ENCODE measurements at regions of chr10 and their contacts with region 1.

Region 1: DNA sequence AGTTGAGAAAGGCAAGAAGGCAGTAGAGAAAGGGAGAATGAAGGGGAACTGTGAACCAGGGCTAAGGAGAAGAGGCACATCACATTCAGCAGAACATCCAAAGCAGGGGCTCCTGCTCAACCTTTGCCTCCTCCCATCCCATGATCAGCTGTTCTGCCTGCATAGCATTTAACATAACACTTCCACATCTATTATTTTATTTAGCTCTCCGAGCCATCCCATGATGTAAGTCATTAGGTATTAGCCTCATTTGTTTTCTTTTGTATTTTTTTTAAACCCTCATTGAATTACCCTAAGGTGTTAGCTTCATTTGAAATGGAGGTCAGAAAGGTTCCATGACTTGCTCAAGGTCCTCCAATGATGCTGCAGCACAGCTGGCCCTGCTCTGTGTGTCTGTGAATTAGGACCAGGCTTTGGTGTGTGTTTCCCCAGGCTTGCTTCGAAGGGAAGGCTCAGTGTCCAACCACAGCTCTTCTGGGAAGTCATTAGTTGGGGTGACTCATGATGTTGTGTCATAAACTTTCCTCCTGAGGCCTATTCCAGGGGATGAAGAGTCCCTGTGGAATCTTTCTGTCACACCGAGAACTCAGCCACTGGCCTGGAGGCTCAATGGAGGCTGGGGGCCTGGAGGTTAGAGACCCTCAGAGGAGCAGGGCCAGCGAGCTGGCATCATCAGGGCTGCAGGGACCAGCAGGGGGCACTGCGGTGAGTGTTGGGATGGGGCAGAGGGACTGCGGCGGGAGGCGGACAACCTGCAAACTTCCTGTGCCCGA is 16.5 kb downstream of the NPFFR1 start:
- DNase-seq: no peak
- ATAC-seq: peak; percentile 31
- H3K4me3 Mint-ChIP-seq: no peak overlapping the region
- H3K27ac Mint-ChIP-seq: no peak overlapping the region
- H3K4me1 Mint-ChIP-seq: peaks cover 8% of the 10 kb centered on the region
- H3K27me3 Mint-ChIP-seq: peaks cover 13% of the 10 kb centered on the region
- CTCF ChIP-seq: no peak

Region 2: DNA sequence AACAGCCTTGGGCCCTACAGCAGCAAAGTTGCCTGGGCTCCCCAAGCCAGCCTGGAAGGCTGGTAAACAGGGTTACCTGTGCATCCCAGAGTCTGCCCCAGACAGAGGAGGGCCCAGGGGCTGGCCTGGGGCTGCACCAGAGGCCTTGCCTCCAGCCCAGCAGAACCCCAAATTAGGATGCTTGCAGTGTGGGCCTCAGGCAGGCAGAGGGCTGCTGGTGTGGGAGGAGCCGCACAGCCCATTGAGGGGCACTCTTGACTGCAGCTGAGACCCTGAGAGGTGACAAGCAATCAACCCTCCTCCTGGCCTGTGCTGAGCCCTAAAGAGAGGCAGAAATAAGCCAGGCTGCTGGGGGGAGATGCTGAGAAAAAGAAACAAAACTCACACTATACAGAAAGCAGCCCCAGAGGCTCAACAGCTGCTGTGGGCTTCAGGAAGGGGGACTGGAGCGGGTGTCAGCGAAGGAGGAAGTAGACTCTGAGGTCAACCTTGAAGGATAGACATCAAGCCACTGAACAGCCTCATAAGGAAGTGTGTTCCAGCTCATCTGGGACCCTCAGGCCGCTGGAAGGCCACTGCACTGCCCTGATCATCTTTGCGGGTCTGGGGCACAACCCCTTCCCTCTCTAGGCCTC is 141.3 kb before region 1 on chr10:
- CTCF ChIA-PET with region 1: no interaction called
- POLR2A ChIA-PET with region 1: no interaction called
- intact Hi-C with region 1: no loop called
- DNase-seq: no peak
- ATAC-seq: no peak
- H3K4me3 Mint-ChIP-seq: no peak overlapping the region
- H3K27ac Mint-ChIP-seq: peak overlapping the region; percentile 46
- H3K4me1 Mint-ChIP-seq: peaks cover 8% of the 10 kb centered on the region
- H3K27me3 Mint-ChIP-seq: no peaks in the 10 kb centered on the region
- CTCF ChIP-seq: no peak

Region 3: DNA sequence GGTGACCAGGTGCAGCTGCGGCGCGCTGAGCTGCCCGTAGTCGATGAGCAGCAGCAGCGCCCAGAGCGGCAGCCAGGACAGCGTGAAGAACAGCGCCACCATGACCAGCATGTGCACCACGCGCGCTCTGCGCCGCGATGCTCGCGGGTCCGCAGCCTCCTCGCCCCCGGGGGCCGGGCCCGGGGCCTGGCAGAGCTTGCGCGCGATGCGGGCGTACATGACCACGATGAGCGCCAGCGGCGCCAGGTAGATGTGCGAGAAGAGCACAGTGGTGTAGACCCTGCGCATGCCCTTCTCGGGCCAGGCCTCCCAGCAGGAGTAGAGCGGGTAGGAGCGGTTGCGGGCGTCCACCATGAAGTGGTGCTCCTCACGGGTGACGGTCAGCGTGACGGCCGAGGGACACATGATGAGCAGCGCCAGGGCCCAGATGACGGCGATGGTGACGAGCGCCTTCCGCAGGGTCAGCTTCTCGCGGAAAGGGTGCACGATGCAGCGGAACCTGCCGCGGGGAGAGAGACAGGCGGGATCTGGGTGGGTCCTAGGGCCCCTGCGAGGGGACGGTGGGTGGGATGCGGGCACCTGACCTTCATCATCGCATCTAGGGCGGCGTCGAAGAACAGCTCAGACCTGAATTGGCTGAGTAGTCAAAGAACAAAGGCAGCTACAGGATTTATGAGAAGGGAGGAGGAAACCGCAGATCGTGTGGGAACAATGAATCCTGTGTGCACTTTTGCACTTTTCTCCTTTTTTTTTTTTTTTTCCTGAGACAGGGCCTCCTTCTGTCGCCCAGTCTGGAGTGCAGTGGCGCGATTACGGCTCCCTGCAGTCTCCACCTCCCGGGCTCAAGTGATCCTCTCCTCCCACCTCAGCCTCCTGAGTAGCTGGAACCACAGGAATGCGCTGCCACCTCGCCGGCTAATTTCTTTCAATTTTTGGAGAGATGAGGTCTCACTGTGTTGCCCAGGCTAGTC is 11.7 kb before region 1 on chr10:
- CTCF ChIA-PET with region 1: interaction called, 11 read pairs
- POLR2A ChIA-PET with region 1: no interaction called
- intact Hi-C with region 1: no loop called
- DNase-seq: no peak
- ATAC-seq: peak; percentile 34
- H3K4me3 Mint-ChIP-seq: peak overlapping the region; percentile 55
- H3K27ac Mint-ChIP-seq: no peak overlapping the region
- H3K4me1 Mint-ChIP-seq: peaks cover 10% of the 10 kb centered on the region
- H3K27me3 Mint-ChIP-seq: peaks cover 34% of the 10 kb centered on the region
- CTCF ChIP-seq: no peak